ENCODE measurements at regions of chr20 and their contacts with region 1.

Region 1: GRCh38 chr20:63101781-63102719 is 95.3 kb upstream of the BHLHE23 start:
- DNase-seq: peak; percentile 84
- H3K4me3 Mint-ChIP-seq: peak overlapping the region; percentile 79
- H3K27ac Mint-ChIP-seq: peak overlapping the region; percentile 85
- H3K4me1 Mint-ChIP-seq: peaks cover 5% of the 10 kb centered on the region
- H3K27me3 Mint-ChIP-seq: no peaks in the 10 kb centered on the region

Region 2: DNA sequence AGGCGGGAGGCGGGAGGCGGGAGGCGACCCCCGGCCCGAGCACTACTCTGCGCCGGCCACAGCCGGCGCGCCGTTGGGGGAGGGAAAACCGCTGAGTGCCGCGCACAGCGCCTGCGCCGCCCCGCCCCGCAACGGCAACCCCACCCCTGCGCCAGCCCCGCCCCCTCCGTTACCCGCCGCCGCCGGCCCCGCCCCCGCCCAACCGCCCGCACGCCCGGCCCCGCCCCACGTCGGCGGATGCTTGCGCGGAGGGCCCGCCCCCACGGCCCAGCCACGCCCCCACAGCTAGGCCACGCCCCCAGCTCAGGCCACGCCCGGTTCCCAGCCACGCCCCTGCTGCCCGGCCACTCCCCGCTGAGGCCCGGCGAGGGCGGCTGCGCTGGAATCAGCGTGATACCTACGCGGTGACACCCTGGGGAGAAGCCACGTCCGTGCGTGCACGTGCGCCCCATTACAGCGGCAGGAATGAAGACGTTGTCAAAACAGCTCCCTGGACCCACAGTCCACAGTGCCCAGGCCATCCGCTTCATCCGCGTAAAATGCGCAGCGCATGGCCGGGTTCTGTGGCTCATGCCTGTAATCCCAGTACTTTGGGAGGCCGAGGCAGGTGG is 240.2 kb before region 1 on chr20 and contains the start of gene TCFL5:
- CTCF ChIA-PET with region 1: no interaction called
- intact Hi-C with region 1: loop called (anchors 5 kb)
- DNase-seq: peak; percentile 92
- H3K4me3 Mint-ChIP-seq: peak within 1 kb of the TSS; percentile 65
- H3K27ac Mint-ChIP-seq: no peak within 1 kb of the TSS
- H3K4me1 Mint-ChIP-seq: peaks cover 24% of the 10 kb centered on the region
- H3K27me3 Mint-ChIP-seq: no peaks in the 10 kb centered on the region
- total RNA-seq, gene TCFL5: 5.4 to 5.5 TPM

Region 3: GRCh38 chr20:63025534-63026331 is 76.3 kb before region 1 on chr20:
- CTCF ChIA-PET with region 1: no interaction called
- intact Hi-C with region 1: loop called (anchors 2 kb)
- DNase-seq: peak; percentile 71
- H3K4me3 Mint-ChIP-seq: peak overlapping the region; percentile 21
- H3K27ac Mint-ChIP-seq: no peak overlapping the region
- H3K4me1 Mint-ChIP-seq: peaks cover 15% of the 10 kb centered on the region
- H3K27me3 Mint-ChIP-seq: peaks cover 8% of the 10 kb centered on the region

Region 4: GRCh38 chr20:63056236-63056948 is 45.7 kb before region 1 on chr20:
- CTCF ChIA-PET with region 1: no interaction called
- intact Hi-C with region 1: loop called (anchors 2 kb)
- DNase-seq: peak; percentile 61
- H3K4me3 Mint-ChIP-seq: no peak overlapping the region
- H3K27ac Mint-ChIP-seq: no peak overlapping the region
- H3K4me1 Mint-ChIP-seq: no peaks in the 10 kb centered on the region
- H3K27me3 Mint-ChIP-seq: peaks cover 8% of the 10 kb centered on the region

Region 5: GRCh38 chr20:63216041-63216848 is 114.2 kb after region 1 on chr20 and contains the start of gene YTHDF1:
- CTCF ChIA-PET with region 1: no interaction called
- intact Hi-C with region 1: loop called (anchors 1 kb)
- DNase-seq: peak; percentile 97
- H3K4me3 Mint-ChIP-seq: peak within 1 kb of the TSS; percentile 94
- H3K27ac Mint-ChIP-seq: peak within 1 kb of the TSS; percentile 87
- H3K4me1 Mint-ChIP-seq: peaks cover 47% of the 10 kb centered on the region
- H3K27me3 Mint-ChIP-seq: no peaks in the 10 kb centered on the region
- total RNA-seq, gene YTHDF1: 27.6 to 27.8 TPM